OCI-LY7 (cell line): ENCODE measurements at regions of chr1 and their contacts with region 1.

Region 1: GRCh38 chr1:17119773-17120480 is 676 bp upstream of the PADI2 start:
- DNase-seq: peak; percentile 36
- H3K4me3 ChIP-seq: peak overlapping the region; percentile 38
- H3K27ac ChIP-seq: no peak overlapping the region
- H3K4me1 ChIP-seq: peaks cover 16% of the 10 kb centered on the region
- CTCF ChIP-seq: peak; percentile 25; the same call in 1 of the 2 replicates

Region 2: GRCh38 chr1:16631248-16632043 is 488.5 kb before region 1 on chr1:
- CTCF ChIA-PET with region 1: no interaction called
- POLR2A ChIA-PET with region 1: no interaction called
- intact Hi-C with region 1: no loop called
- DNase-seq: no peak
- H3K4me3 ChIP-seq: no peak overlapping the region
- H3K27ac ChIP-seq: no peak overlapping the region
- H3K4me1 ChIP-seq: no peaks in the 10 kb centered on the region
- CTCF ChIP-seq: no peak

Region 3: DNA sequence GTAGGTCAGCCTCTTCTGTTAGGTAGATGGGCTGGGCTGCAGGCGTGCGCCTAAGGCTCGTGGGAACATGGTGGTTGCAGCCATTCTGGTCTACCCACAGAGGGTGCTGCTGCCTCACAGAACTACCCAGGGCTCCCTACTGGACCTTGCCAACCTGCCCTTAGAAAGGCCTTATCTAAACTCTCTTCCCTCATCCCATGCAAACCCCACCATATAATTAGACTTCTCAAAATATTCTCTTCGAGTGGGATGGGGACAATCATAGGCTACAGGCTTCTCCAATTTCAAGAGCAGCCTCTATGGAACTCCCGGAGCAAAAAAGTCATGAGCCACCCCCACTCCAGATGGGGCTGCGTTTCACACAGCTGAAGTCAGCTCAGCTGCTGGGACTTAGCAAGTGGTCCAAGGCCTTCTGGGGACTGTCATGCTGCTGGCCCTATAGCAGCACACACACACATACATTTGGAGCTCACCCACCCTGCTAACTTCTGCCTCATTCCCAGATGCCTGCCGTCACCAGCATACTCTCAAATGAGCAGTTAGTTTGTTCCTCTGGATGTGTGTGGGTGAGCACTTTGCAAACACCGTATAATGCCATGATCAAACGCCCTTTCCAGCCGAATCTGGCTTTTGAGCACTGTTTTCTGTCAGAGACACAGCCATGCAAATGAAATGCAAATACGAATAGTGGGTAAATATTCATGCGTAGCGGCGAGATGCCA is 60.0 kb before region 1 on chr1:
- CTCF ChIA-PET with region 1: no interaction called
- POLR2A ChIA-PET with region 1: no interaction called
- intact Hi-C with region 1: loop called (anchors 5 kb)
- DNase-seq: peak; percentile 76
- H3K4me3 ChIP-seq: peak overlapping the region; percentile 29
- H3K27ac ChIP-seq: no peak overlapping the region
- H3K4me1 ChIP-seq: peaks cover 16% of the 10 kb centered on the region
- CTCF ChIP-seq: peak; percentile 87

Region 4: DNA sequence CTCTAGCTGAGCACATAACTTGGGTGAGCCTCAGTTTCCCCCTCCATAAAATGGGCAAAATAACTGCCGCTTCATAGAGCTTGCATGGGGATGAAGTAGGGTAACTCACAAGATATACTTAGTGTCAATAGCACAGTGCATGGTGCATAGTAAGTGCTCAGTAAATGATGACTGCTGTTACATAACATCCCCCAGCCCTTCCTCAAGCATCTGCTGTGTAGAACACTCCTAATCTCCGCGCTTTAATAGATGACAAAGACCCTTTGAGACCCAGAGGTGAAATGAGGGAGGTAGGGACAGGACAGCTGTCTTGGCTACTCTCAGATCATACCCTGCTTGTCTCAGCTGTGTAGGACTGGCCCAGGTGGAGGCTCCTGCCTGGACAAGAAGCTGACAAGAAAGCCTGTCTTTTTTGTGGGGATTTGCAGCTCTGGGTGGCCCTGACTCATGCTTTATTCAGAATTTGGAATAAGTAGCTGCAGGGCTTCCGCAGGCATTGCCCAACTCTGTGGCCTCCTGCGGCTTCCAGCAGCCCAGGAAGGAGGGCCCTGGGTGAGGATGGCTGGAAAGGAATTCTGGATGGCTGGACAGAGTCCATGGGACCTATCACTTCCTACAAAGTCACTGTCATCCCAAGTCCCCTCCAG is 167.3 kb after region 1 on chr1:
- CTCF ChIA-PET with region 1: no interaction called
- POLR2A ChIA-PET with region 1: no interaction called
- intact Hi-C with region 1: no loop called
- DNase-seq: no peak
- H3K4me3 ChIP-seq: no peak overlapping the region
- H3K27ac ChIP-seq: no peak overlapping the region
- H3K4me1 ChIP-seq: no peaks in the 10 kb centered on the region
- CTCF ChIP-seq: no peak